ENCODE measurements at regions of chr15 and their contacts with region 1.

Region 1: GRCh38 chr15:40793216-40793989 is 13.5 kb upstream of the ZFYVE19 start:
- DNase-seq: peak; percentile 99
- H3K4me3 ChIP-seq: no peak overlapping the region
- H3K27ac ChIP-seq: peak overlapping the region; percentile 58
- H3K4me1 ChIP-seq: peaks cover 48% of the 10 kb centered on the region
- H3K27me3 ChIP-seq: no peaks in the 10 kb centered on the region
- CTCF ChIP-seq: no peak
- POLR2A ChIP-seq: no peak

Region 2: GRCh38 chr15:40743921-40744814 is 49.2 kb before region 1 on chr15:
- CTCF ChIA-PET with region 1: interaction called, 10 read pairs
- POLR2A ChIA-PET with region 1: no interaction called
- dilution Hi-C with region 1: no loop called
- intact Hi-C with region 1: no loop called
- DNase-seq: no peak
- H3K4me3 ChIP-seq: no peak overlapping the region
- H3K27ac ChIP-seq: no peak overlapping the region
- H3K4me1 ChIP-seq: no peaks in the 10 kb centered on the region
- H3K27me3 ChIP-seq: no peaks in the 10 kb centered on the region
- CTCF ChIP-seq: no peak
- POLR2A ChIP-seq: no peak

Region 3: DNA sequence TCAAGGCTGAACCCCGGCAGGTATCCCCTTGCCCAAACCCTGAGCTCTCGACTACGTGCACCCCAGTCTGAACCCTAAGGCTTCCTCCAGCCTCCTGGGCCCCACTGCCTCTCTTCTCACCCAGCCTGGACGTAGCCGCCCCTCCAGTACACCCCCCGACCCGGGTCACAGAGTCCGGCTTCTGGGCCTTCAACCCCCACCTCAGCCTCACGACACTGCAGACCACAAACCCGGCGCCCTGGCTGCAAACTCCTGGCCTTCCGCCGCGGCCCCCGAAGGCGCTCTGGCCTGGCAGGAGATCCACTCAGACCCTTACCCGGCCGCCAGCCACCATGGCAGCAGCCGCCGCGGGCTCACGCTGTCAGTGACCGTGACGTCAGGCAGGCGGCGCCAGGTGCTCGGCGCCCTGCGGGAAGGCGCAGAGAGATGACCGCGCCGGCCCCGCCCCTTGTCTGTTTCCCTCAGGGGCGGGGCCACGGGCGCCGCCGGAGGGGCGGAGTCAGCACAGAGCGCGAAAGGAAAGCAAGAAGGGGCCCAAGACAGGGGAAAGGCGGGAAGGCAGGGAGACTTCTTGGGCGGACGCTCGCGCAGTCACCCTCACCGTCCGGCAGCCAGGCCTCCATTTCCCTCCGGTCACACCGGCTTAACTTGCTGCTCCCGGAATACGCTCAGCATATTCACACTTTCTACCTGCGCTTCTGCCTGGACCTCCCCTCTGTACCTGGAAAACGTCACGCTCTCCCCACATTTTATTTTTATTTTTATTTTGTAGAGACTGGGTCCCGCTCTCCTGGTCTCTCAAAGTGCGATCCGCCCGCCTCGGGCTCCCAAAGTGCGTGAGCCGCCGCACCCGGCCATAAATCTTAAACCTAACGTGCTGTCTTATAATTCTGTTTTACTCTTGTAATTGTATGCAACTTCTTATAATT is 38.3 kb before region 1 on chr15 and contains the start of gene RMDN3:
- CTCF ChIA-PET with region 1: no interaction called
- POLR2A ChIA-PET with region 1: no interaction called
- dilution Hi-C with region 1: no loop called
- intact Hi-C with region 1: loop called (anchors 1 kb)
- DNase-seq: peak; percentile 94
- H3K4me3 ChIP-seq: peak within 1 kb of the TSS; percentile 70 to 82 (median 71)
- H3K27ac ChIP-seq: peak within 1 kb of the TSS; percentile 71
- H3K4me1 ChIP-seq: peaks cover 8% of the 10 kb centered on the region
- H3K27me3 ChIP-seq: no peaks in the 10 kb centered on the region
- CTCF ChIP-seq: no peak
- POLR2A ChIP-seq: peak; percentile 81
- total RNA-seq, gene RMDN3: 35.9 and 37.2 TPM in 2 replicates

Region 4: DNA sequence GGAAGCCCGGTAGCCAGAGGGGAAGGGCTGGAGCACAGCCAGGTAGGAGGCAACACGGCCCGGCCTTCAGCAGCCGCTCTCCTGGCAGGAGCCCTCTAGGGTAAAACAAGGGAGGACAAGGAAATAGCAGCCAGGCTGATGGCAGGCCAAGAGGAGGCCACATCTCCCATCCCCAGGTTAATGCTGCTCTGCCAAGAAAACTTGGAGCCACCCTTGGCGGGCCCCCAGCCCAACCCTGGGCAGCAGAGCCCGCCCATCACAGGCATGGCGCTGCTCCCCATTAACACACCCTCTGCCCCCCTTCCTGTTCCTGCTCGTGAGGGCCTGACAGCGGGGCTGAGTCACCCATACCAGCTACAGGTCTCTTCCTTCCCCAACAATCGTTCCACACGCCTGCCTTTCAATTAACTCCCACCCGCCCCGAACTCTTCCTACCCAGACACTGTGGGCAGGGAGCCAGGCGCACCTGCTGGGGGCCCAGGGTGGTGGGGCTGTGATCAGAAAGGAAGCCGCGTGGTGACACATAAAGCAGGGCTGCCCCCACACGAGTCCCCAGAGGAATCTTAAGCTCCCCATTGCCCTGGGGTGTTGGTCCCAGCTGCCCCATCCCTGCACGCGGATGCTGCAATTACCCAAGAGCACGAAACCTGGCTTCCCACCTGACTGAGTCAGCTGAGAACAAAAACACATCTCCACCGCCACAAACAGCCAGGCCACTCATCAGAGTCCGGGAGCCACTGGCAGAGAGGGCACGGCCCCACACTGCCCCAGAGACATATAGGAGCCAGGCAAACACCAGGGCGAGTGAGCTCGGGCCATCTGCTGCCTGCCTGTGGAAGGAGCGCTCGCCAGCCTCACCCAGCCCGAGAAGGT is 23.9 kb before region 1 on chr15 and contains the start of gene C15orf62:
- CTCF ChIA-PET with region 1: interaction called, 7 read pairs
- POLR2A ChIA-PET with region 1: no interaction called
- dilution Hi-C with region 1: no loop called
- intact Hi-C with region 1: loop called (anchors 1 kb)
- DNase-seq: peak; percentile 65
- H3K4me3 ChIP-seq: no peak within 1 kb of the TSS
- H3K27ac ChIP-seq: peak within 1 kb of the TSS; percentile 46
- H3K4me1 ChIP-seq: peaks cover 29% of the 10 kb centered on the region
- H3K27me3 ChIP-seq: no peaks in the 10 kb centered on the region
- CTCF ChIP-seq: no peak
- POLR2A ChIP-seq: no peak
- total RNA-seq, gene C15orf62: 0.38 and 0.44 TPM in 2 replicates

Measured in endothelial cell of umbilical vein (primary cell).